ENCODE measurements at regions of chr2 and their contacts with region 1.

Region 1: GRCh38 chr2:81600088-81600487 is 1295.5 kb upstream of the LRRTM1 start:
- DNase-seq: no peak
- H3K4me3 ChIP-seq: no peak overlapping the region
- H3K27ac ChIP-seq: no peak overlapping the region
- H3K4me1 ChIP-seq: no peaks in the 10 kb centered on the region
- H3K27me3 ChIP-seq: no peaks in the 10 kb centered on the region
- CTCF ChIP-seq: no peak

Region 2: DNA sequence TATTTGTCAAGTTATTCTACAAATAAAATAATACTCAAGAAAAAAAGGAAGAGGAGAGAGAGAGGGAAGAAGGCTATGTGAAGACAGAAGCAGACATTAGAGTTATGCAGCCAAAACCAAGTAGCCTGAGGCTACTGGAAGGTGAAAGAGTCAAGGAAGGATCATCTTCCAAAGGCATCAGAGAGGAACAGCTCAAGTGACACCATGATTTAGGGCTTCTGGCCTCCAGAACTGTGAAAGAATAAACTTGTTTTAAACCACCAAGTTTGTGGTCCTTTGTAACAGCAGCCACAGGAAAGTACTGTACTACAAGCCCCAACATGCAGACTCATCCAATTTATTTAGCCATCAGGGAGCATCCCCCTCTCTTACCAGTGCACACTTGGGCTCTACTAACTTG is 507.1 kb before region 1 on chr2:
- CTCF ChIA-PET with region 1: no interaction called
- POLR2A ChIA-PET with region 1: no interaction called
- intact Hi-C with region 1: no loop called
- DNase-seq: no peak
- H3K4me3 ChIP-seq: no peak overlapping the region
- H3K27ac ChIP-seq: no peak overlapping the region
- H3K4me1 ChIP-seq: no peaks in the 10 kb centered on the region
- H3K27me3 ChIP-seq: no peaks in the 10 kb centered on the region
- CTCF ChIP-seq: no peak

Region 3: GRCh38 chr2:81551040-81551634 is 49.0 kb before region 1 on chr2:
- CTCF ChIA-PET with region 1: no interaction called
- POLR2A ChIA-PET with region 1: no interaction called
- intact Hi-C with region 1: no loop called
- DNase-seq: no peak
- H3K4me3 ChIP-seq: no peak overlapping the region
- H3K27ac ChIP-seq: no peak overlapping the region
- H3K4me1 ChIP-seq: no peaks in the 10 kb centered on the region
- H3K27me3 ChIP-seq: no peaks in the 10 kb centered on the region
- CTCF ChIP-seq: no peak

Region 4: GRCh38 chr2:81644189-81644588 is 44.1 kb after region 1 on chr2:
- CTCF ChIA-PET with region 1: no interaction called
- POLR2A ChIA-PET with region 1: no interaction called
- intact Hi-C with region 1: loop called (anchors 5 kb)
- DNase-seq: no peak
- H3K4me3 ChIP-seq: no peak overlapping the region
- H3K27ac ChIP-seq: no peak overlapping the region
- H3K4me1 ChIP-seq: no peaks in the 10 kb centered on the region
- H3K27me3 ChIP-seq: no peaks in the 10 kb centered on the region
- CTCF ChIP-seq: no peak

Measured in PC-9 (cell line).